ENCODE measurements at regions of chr3 and their contacts with region 1.

Region 1: GRCh38 chr3:124419303-124419702 is 310.9 kb upstream of the UMPS start:
- DNase-seq: no peak
- H3K4me3 ChIP-seq: no peak overlapping the region
- H3K27ac ChIP-seq: no peak overlapping the region
- H3K4me1 ChIP-seq: no peaks in the 10 kb centered on the region
- H3K27me3 ChIP-seq: no peaks in the 10 kb centered on the region
- CTCF ChIP-seq: no peak
- POLR2A ChIP-seq: no peak

Region 2: GRCh38 chr3:124026516-124026915 is 392.8 kb before region 1 on chr3:
- intact Hi-C with region 1: loop called (anchors 5 kb)
- DNase-seq: no peak
- H3K4me3 ChIP-seq: no peak overlapping the region
- H3K27ac ChIP-seq: no peak overlapping the region
- H3K4me1 ChIP-seq: no peaks in the 10 kb centered on the region
- H3K27me3 ChIP-seq: no peaks in the 10 kb centered on the region
- CTCF ChIP-seq: no peak
- POLR2A ChIP-seq: no peak